Left colon (tissue), 2 donors: ENCODE measurements at regions of chr4 and their contacts with region 1.

Region 1: GRCh38 chr4:38179690-38180377 is 219.6 kb downstream of the PTTG2 start:
- DNase-seq: peak; percentile 73 to 79
- ATAC-seq: peak; percentile 82

Region 2: DNA sequence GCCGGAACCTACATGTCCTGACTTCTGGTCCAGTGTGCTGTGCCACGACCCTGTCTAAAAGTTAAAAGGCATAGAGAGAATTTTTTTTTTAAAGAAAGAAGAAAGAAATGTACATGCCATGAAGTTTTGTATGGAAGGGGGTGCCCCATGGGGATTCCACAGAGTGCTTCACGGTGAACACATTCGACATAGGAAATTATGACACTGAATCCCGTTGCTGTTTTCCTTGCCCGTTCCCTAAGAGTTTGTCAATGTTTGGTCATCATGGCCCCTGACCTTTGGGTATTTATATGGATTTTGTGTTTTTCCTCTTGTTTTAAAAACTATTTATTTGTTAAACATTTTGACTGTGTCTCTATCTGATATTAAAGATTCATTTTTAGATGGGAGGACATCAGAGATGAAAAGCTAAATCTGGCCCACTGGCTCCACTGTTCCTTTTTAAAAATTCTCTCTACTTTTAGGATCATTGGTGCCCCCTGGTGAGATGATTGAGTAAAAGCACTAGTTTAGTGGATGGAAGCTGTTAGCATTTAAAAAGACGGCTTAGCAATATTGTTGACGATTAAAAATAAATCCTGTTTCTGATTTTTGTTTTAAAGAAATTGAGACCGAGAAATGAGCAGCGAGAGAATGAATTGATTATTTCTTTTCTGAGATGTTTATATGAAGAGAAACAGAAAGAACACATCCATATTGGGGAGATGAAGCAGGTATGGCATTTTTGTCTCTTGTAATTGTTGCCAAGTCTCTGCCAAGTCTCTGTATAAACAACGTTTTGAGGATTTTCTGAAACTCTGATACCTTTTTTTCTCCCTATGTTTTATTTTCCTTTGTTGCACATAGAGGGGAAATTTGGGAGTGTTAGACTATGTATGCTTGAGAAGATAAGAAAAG is 144.6 kb before region 1 on chr4:
- intact Hi-C with region 1: no loop called
- DNase-seq: no peak
- ATAC-seq: peak; percentile 56

Region 3: DNA sequence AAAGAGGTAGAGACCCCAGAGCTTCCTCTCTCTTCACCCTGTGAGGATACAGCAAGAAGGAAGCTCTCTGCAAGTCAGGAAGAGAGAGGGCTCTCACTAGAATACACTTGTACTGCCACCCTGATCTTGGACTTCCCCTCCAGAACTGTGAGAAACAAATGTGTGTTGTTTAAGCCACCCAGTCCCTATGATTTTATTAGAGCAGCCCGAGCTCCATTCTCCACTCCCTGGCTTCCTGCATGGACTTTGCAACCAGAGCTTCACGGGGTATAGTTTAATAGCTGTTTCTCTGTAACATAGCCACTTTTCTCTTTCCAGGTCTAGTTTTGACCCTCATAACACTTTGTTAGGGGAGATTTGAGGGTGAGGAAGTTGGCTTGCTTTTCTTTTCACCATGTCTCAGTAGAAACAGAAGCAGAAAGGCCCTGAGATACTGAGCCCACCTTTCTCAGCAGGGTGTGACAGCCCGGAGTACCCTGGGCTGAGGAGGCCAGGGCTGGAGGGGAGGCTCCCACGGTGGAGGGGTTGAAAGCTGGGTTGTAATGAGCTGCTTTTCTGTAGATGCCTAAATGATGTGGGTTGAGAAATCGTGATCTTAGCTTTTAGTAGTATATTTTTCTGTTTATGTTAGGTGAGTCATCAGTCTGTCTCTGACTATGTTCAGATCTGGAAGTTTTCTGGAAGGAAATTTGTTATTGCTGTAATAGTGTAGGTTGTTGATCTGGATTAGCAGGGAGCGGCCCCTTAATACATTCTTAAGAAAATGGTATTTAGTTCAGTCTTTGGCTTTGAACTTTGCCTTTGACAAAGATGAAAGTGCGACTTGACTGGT is 101.0 kb before region 1 on chr4:
- intact Hi-C with region 1: loop called in 1 of 2 experiments (anchors 10 kb)
- DNase-seq: peak in 1 of 2 donors; percentile 74
- ATAC-seq: peak; percentile 87

Region 4: DNA sequence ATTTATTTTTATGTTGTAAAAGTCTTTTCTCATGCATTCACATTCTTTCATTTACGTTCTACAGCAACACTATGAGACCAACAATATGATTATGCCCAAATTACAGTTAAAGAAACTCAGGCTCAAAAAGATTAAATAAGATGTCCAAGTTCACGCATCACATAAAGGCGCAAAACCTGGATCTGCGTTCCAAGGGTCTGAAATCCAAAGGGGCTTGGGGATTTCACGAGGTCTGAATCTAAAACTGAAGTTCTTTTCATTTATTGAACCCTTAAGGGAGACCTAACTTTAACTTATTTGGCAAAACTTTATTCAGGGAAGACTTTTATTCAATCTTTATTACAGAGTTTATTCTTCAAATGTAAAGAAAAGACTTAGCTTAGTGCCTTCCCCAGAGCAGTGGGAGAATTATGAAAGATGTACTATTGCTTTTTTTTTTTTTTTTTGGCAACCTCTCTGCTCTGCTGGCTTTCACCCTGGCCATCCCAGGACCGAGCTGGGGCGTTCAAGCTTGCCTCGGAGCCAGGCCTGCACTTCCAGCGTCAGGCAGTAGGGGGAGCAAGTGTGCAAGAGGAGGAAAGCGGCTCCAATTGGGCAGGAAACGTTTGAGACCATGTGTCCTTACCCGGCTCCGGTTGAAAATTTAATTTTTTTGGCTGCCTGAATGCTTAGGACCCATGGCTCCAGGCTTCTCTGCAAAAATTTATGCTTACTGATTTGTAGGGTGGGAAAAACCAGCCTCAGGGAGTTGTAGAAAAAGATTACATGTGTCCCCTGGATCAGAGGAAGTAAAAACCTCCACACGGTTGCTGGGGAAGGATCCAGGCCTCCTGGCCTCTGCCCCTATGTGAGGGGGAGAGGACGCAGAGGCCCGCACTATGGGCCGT is 139.9 kb after region 1 on chr4:
- intact Hi-C with region 1: loop called in 1 of 2 experiments (anchors 10 kb)
- DNase-seq: peak; percentile 88 to 97
- ATAC-seq: peak; percentile 67

Region 5: GRCh38 chr4:38360201-38360600 is 180.4 kb after region 1 on chr4:
- intact Hi-C with region 1: no loop called
- DNase-seq: no peak
- ATAC-seq: no peak

Region 6: GRCh38 chr4:38503689-38504395 is 324.0 kb after region 1 on chr4:
- intact Hi-C with region 1: no loop called
- DNase-seq: no peak
- ATAC-seq: no peak

Region 7: DNA sequence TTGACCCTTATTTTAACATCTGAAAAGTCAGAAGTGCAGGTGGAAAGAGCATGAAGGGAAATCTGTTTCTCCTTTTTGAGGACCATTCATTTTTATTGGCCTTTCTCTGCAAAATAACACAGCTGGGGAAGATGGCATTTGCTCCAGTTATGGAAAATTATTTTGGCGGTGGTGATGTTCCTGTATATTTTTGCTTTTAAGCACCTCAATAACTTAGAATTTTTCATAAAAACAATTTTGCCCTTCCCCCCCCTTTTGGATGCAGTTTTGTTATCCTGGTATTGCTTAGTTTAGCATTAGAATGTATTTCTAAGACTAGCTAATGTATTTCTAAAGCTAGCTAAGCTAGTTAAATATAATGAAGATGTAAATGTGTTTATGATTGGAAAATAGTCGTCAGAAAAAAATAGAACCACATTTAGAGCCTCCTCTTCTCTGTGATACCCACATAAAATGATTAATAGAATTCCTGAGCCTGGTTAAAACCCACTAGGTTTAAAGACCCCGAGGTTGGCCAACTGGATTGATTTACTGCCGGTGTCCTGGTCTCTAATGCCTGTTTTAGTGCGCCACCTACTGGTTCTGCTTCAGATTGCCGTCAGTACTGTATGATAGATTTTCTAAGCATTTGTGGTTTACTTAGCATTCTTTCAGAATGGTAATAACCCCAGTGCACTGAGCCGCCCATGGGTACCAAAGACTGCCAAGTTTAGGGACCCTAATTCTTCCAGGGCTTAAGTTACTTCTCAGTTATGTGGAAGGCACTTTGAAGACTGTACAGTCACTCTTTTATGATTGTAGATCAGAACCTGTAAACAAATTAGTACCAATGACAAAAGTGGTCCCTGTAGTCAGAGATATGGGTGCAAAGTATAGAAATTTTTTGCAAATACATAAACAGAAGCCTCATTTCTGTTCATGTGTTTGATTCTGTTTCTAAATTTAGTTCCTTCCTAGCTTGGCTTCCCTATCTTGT is 495.6 kb after region 1 on chr4:
- intact Hi-C with region 1: loop called in 1 of 2 experiments (anchors 2 kb)
- DNase-seq: peak; percentile 74 to 89
- ATAC-seq: peak; percentile 13

Region 8: DNA sequence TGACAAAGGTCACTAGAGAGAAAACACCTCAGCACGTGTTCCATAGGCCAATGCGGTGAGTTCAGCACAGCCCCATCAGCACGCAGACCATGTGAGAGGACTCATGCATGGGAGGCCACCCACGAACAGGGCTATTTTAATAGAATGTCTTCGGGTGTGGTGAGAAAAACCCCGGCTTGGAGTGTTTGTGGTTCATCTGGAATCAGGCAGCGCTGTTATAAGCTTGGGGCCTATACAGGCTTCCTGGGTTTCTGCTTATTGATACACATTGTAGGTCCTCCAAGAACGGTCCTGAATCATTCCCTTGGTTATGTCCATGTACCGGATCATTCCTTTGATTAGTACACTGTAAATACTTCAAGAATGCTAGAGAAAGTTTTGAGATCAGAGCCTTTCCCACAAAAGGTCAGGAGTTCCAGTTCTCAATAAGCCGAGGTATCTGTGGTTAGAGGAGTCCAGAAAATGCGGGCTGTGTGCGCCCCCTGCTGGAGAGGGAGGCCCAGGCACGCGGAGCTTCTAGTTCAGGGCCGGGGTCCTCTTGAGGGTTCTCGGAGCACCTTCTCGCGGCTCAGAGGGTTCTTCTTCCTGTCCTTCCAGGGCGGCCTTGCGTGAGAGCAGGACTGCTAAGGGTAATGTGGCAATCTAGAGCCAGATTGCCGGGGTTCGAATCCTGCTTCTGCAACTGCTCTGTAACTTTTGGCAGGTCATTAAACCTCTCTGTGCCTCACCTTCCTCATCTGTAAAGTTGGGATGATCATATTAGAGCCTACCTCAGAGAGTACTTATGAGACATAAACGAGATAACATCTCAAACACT is 551.2 kb after region 1 on chr4:
- intact Hi-C with region 1: loop called in 1 of 2 experiments (anchors 2 kb)
- DNase-seq: peak; percentile 65 to 93
- ATAC-seq: peak; percentile 43